ENCODE measurements at regions of chr12 and their contacts with region 1.

Region 1: DNA sequence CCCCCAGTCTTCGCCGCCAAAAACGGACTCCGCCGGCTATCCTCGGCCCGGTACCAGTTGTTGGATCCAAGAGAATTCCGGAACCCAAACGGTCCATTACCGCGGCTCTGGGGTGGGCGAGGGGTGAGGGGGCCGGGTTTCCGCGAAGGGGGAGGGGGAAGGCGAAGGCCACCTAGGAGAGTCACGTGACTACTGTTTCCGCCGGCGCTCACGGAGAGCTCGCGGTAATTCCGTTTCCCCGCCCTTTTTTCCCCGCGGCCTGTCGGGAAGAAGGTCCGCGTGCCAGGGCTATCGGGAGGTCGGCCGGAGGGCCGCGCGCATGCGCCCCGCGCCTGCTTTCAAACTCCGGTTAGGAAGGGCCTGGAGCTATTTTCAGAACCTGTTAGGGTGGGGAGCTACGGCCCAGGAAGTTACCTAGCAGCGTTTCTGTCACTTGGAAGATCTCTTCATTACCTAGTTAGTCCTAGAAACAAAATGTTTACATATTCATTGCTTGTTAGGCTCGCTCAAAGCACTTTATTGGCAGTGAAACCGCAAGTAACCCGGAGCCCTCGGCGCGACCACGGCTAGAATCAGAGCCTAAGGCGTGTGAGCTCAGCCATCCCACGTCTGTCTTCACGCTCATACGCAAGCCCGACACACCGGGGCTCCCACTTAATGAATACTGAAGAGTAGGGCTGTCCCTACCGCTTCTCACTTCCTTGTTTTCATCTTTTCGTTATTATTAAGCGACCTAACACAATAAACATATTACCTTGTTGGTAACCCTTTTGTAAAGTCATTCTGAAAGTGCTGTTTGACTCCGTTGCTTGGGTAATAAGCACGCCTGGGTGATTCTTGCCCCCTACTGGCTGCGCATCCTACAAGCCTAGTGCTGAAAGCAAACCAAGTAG is 624 bp upstream of the SBNO1 start:
- DNase-seq: peak; percentile 98
- H3K4me3 Mint-ChIP-seq: peak overlapping the region; percentile 85
- H3K27ac Mint-ChIP-seq: peak overlapping the region; percentile 99
- H3K4me1 Mint-ChIP-seq: peaks cover 24% of the 10 kb centered on the region
- H3K27me3 Mint-ChIP-seq: no peaks in the 10 kb centered on the region

Region 2: GRCh38 chr12:122871851-122872780 is 493.2 kb before region 1 on chr12:
- CTCF ChIA-PET with region 1: no interaction called
- intact Hi-C with region 1: loop called (anchors 10 kb)
- DNase-seq: peak; percentile 85
- H3K4me3 Mint-ChIP-seq: peak overlapping the region; percentile 62
- H3K27ac Mint-ChIP-seq: peak overlapping the region; percentile 67
- H3K4me1 Mint-ChIP-seq: peaks cover 59% of the 10 kb centered on the region
- H3K27me3 Mint-ChIP-seq: peaks cover 23% of the 10 kb centered on the region

Region 3: DNA sequence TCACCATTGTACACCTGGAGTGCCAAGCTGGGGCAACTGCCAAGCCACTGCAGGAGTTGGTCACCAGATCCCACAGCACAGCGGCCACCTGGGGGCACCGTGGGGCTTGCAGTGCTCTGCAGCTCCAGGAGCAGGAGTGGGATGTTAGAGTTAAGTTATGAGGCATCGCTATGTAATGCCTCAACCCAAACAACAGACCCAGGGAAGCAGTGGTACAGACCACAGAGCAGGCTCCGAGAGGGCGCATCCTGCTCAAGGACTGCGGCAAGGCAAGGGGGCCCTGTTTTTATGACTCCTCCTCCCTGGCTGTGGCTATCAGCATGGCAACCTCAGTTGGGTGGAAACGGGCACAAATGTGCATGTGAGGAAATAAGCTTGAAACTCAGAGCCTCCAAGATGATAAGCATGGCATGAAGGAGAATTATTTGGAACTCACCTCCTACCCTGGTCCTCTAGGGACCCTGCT is 321.7 kb before region 1 on chr12:
- CTCF ChIA-PET with region 1: interaction called, 3 read pairs
- intact Hi-C with region 1: loop called (anchors 1 kb)
- DNase-seq: peak; percentile 86
- H3K4me3 Mint-ChIP-seq: no peak overlapping the region
- H3K27ac Mint-ChIP-seq: peak overlapping the region; percentile 3
- H3K4me1 Mint-ChIP-seq: peaks cover 44% of the 10 kb centered on the region
- H3K27me3 Mint-ChIP-seq: no peaks in the 10 kb centered on the region

Region 4: DNA sequence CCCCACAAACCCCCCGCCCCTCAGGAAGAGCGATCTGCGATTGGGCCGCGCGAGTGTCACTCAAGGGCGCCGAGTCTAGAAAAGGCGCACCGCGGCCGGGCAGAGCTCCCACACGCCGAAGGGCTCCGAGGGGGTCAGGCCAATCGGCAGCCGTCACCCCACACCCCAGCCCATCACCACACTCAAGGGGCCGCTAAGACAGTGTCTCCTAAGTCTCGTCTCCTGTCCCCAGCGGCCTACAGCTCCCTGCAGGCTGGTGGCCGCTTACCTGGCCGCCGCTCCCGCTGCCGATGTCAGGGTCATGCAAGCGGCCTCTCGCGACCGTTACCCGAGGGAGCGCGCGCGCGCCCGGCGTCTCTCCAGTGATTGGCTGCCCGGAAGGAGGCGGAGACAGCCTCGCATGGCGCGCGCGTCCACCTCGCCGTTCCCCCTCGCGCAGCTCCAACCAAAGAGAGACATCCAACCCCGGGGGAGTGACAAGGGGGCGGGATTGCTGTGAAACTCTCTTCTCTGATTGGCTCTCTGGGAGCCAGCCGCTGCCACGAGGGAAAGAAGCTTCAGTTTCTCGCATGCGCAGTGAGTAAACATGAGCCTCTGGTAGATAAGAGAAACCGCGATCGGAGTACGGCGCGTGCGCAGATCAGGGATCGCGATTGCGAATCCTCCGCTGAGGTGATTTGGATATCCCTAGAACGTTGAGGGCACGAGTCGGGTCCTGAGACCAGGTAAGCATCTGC is 132.3 kb before region 1 on chr12 and contains the starts of genes MPHOSPH9 and MTRFR:
- CTCF ChIA-PET with region 1: interaction called, 6 read pairs
- intact Hi-C with region 1: loop called (anchors 1 kb)
- DNase-seq: peak; percentile 100
- H3K4me3 Mint-ChIP-seq: peak within 1 kb of the TSS; percentile 96
- H3K27ac Mint-ChIP-seq: peak within 1 kb of the TSS; percentile 99
- H3K4me1 Mint-ChIP-seq: peaks cover 58% of the 10 kb centered on the region
- H3K27me3 Mint-ChIP-seq: no peaks in the 10 kb centered on the region
- total RNA-seq, gene MPHOSPH9: 111 to 114 TPM
- total RNA-seq, gene MTRFR: 27.7 to 27.8 TPM

Region 5: DNA sequence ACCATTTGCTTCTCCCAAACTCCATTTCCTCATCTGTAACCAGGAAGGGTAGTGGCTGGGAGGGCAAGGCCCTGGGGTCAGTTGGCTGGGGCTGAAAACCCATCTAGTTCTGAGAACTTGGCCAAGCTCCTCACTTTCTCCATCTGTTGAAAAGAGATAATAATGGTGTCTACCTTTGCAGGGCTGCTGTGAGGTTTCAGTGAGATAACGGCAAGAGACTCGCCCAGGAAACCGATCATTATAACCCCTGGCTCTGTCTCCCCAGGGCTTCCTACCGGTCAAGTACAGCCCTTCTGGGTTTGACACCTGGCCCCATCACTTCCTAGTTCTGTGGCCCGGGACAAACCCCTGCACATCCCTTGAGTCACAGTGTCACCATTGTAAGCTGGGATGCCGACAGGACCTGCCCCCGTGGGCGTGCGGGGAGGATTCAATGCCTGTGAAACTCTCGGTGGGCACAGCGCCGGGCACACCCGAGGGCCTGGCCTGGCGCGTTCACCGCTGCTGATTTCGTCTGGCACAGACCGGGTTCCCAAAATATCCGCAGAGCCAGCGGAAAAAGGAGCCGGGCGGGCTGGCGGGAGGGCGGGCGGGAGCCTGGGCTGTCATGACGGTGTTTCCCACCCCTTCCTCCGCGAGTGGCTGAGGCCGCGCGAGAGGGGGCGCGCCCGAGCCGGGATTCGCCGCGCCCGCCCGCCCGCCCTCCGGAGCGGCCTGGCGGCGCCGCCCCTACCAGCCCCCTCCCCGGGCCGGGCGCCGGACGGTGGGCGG is 23.1 kb after region 1 on chr12:
- CTCF ChIA-PET with region 1: interaction called, 3 read pairs
- intact Hi-C with region 1: loop called (anchors 1 kb)
- DNase-seq: peak; percentile 85
- H3K4me3 Mint-ChIP-seq: peak overlapping the region; percentile 80
- H3K27ac Mint-ChIP-seq: peak overlapping the region; percentile 81
- H3K4me1 Mint-ChIP-seq: peaks cover 31% of the 10 kb centered on the region
- H3K27me3 Mint-ChIP-seq: no peaks in the 10 kb centered on the region

Region 6: GRCh38 chr12:123580772-123581171 is 215.5 kb after region 1 on chr12:
- CTCF ChIA-PET with region 1: interaction called, 3 read pairs
- intact Hi-C with region 1: loop called (anchors 1 kb)
- DNase-seq: no peak
- H3K4me3 Mint-ChIP-seq: no peak overlapping the region
- H3K27ac Mint-ChIP-seq: no peak overlapping the region
- H3K4me1 Mint-ChIP-seq: peaks cover 22% of the 10 kb centered on the region
- H3K27me3 Mint-ChIP-seq: no peaks in the 10 kb centered on the region

Region 7: DNA sequence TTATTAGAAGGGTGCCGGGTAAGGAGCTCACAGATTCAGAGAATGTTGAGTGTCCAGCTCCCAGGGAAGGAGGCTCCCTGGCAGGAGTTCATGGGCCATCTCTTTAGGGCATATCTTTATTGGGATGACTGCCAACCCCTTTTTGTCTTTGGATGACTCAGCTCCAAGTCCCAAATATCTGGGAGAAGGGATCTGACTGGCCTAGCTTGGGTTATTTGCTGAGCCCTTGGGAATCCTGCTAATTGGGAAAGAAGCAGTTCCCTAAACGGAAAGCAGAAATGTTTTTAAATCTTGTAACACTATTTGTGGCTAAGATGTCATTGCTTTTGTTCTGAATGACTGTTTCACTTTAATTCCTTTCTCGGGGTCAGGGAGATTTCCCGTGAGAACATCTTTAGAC is 249.3 kb after region 1 on chr12:
- CTCF ChIA-PET with region 1: no interaction called
- intact Hi-C with region 1: no loop called
- DNase-seq: no peak
- H3K4me3 Mint-ChIP-seq: no peak overlapping the region
- H3K27ac Mint-ChIP-seq: no peak overlapping the region
- H3K4me1 Mint-ChIP-seq: peaks cover 2% of the 10 kb centered on the region
- H3K27me3 Mint-ChIP-seq: no peaks in the 10 kb centered on the region

Region 8: GRCh38 chr12:123972457-123973401 is 607.5 kb after region 1 on chr12 and contains the starts of genes CCDC92 and ZNF664:
- CTCF ChIA-PET with region 1: interaction called, 3 read pairs
- intact Hi-C with region 1: loop called (anchors 1 kb)
- DNase-seq: peak; percentile 94
- H3K4me3 Mint-ChIP-seq: peak within 1 kb of the TSS; percentile 88
- H3K27ac Mint-ChIP-seq: peak within 1 kb of the TSS; percentile 61
- H3K4me1 Mint-ChIP-seq: peaks cover 33% of the 10 kb centered on the region
- H3K27me3 Mint-ChIP-seq: no peaks in the 10 kb centered on the region
- total RNA-seq, gene CCDC92: 3.3 to 3.7 TPM
- total RNA-seq, gene ZNF664: 42.2 to 46.0 TPM